ENCODE measurements at regions of chr7 and their contacts with region 1.

Region 1: GRCh38 chr7:140810830-140811556 is 113.7 kb downstream of the BRAF start:
- DNase-seq: no peak

Region 2: GRCh38 chr7:140745266-140746058 is 65.5 kb before region 1 on chr7:
- intact Hi-C with region 1: no loop called
- DNase-seq: no peak

Region 3: GRCh38 chr7:140924019-140924820 is 113.2 kb after region 1 on chr7:
- intact Hi-C with region 1: loop called (anchors 10 kb)
- DNase-seq: peak; percentile 86

Region 4: GRCh38 chr7:141014524-141015395 is 203.8 kb after region 1 on chr7 and contains the start of gene MRPS33:
- intact Hi-C with region 1: loop called (anchors 2 kb)
- DNase-seq: peak; percentile 97
- total RNA-seq, gene MRPS33: 92.4 TPM

Region 5: DNA sequence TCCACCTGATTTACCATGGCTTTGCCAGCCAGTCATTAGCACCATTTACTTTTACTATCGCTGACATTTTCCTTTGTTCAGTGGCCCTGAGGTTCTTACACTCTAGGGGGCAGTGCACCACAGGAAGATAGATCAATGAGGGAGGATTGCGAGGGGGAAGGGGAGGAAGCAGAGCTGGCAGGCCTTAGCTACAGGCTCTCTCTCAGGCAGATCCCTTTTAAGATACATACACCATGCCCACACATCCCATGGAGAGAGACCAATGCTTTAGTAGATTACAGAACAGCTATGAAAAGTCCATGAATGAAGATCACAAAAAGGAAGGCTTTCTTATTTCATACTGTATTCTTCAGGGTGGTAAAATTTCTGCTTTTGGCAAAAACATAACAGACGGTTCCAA is 843.6 kb after region 1 on chr7:
- intact Hi-C with region 1: loop called (anchors 10 kb)
- DNase-seq: no peak